Naive thymus-derived CD4-positive, alpha-beta T cell (primary cell): ENCODE measurements at regions of chr14 and their contacts with region 1.

Region 1: GRCh38 chr14:97602438-97603117 is 805.4 kb downstream of the VRK1 start:
- DNase-seq: peak; percentile 39 to 92 (median 89)
- ATAC-seq: peak; percentile 94
- H3K4me3 ChIP-seq: peak overlapping the region; percentile 37
- H3K4me3 Mint-ChIP-seq: no peak overlapping the region
- H3K27ac ChIP-seq: peak overlapping the region; percentile 80
- H3K27ac Mint-ChIP-seq: no peak overlapping the region
- H3K4me1 ChIP-seq: peaks cover 57 to 64% of the 10 kb centered on the region in 2 donors
- H3K4me1 Mint-ChIP-seq: peaks cover 0 to 31% (median 4%) of the 10 kb centered on the region in 7 donors
- H3K27me3 ChIP-seq: no peaks in the 10 kb centered on the region
- H3K27me3 Mint-ChIP-seq: no peaks in the 10 kb centered on the region

Region 2: DNA sequence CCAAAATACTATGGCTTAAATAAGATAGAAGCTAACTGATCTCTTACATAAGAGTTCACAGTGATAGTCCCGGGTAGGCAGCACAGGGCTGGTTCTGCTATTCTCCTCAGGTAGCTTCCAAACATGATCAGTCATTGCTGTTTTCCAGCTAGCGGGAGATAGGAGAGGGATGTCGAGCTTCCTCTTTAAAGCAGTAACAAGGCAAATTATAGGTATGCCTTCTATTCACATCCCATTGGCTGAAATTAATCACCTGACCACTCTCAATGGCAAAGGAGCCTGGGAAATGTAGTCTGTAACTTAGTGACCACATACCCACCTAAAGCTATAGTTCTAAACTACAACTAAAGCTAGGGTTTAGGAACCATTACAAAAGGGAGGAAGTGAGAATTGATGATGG is 839.9 kb before region 1 on chr14:
- CTCF ChIA-PET with region 1: no interaction called
- POLR2A ChIA-PET with region 1: no interaction called
- intact Hi-C with region 1: no loop called
- DNase-seq: peak in 7 of 9 donors; percentile 42 to 65 (median 52)
- ATAC-seq: peak; percentile 92
- H3K4me3 ChIP-seq: peak overlapping the region; percentile 19
- H3K4me3 Mint-ChIP-seq: peak overlapping the region in 9 of 10 donors; percentile 28 to 82 (median 64)
- H3K27ac ChIP-seq: no peak overlapping the region
- H3K27ac Mint-ChIP-seq: peak overlapping the region in 1 of 9 donors; percentile 73
- H3K4me1 ChIP-seq: no peaks in the 10 kb centered on the region
- H3K4me1 Mint-ChIP-seq: peaks cover 3 to 6% (median 5%) of the 10 kb centered on the region in 7 donors
- H3K27me3 ChIP-seq: no peaks in the 10 kb centered on the region
- H3K27me3 Mint-ChIP-seq: peaks cover 4 to 34% (median 9%) of the 10 kb centered on the region in 5 donors

Region 3: GRCh38 chr14:96901227-96901626 is 701.4 kb before region 1 on chr14:
- CTCF ChIA-PET with region 1: no interaction called
- POLR2A ChIA-PET with region 1: no interaction called
- intact Hi-C with region 1: no loop called
- DNase-seq: no peak
- ATAC-seq: no peak
- H3K4me3 ChIP-seq: no peak overlapping the region
- H3K4me3 Mint-ChIP-seq: no peak overlapping the region
- H3K27ac ChIP-seq: no peak overlapping the region
- H3K27ac Mint-ChIP-seq: no peak overlapping the region
- H3K4me1 ChIP-seq: no peaks in the 10 kb centered on the region
- H3K4me1 Mint-ChIP-seq: peaks cover 0 to 24% (median 5%) of the 10 kb centered on the region in 7 donors
- H3K27me3 ChIP-seq: no peaks in the 10 kb centered on the region
- H3K27me3 Mint-ChIP-seq: no peaks in the 10 kb centered on the region

Region 4: DNA sequence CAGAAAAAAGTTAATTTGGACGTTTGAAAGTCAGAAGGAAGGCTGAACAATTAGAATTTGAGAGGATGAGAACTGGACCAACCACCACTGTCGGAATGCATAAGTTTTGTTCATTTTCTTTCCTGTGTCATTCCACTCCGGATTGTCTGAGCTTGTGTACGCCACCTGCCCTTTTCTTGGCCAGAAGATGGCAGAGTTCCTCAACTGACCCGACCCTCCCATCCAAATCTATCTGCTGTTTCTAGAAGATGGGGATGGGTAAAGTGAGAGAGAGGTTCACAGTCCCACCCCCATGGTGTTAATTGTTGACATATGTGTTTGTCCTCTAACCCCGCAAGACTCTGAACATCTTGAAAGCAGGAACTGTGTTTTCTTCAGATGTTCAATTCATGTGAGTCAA is 417.4 kb before region 1 on chr14:
- CTCF ChIA-PET with region 1: interaction called, 3 read pairs
- POLR2A ChIA-PET with region 1: no interaction called
- intact Hi-C with region 1: loop called in 1 of 2 experiments (anchors 1 kb)
- DNase-seq: peak in 6 of 9 donors; percentile 1 to 36 (median 30)
- ATAC-seq: peak; percentile 57
- H3K4me3 ChIP-seq: no peak overlapping the region
- H3K4me3 Mint-ChIP-seq: no peak overlapping the region
- H3K27ac ChIP-seq: no peak overlapping the region
- H3K27ac Mint-ChIP-seq: peak overlapping the region in 4 of 9 donors; percentile 7 to 53 (median 41)
- H3K4me1 ChIP-seq: no peaks in the 10 kb centered on the region
- H3K4me1 Mint-ChIP-seq: peaks cover 0 to 22% (median 6%) of the 10 kb centered on the region in 7 donors
- H3K27me3 ChIP-seq: no peaks in the 10 kb centered on the region
- H3K27me3 Mint-ChIP-seq: peaks cover 0 to 22% (median 0%) of the 10 kb centered on the region in 5 donors

Region 5: GRCh38 chr14:97458661-97459579 is 143.7 kb before region 1 on chr14:
- CTCF ChIA-PET with region 1: no interaction called
- POLR2A ChIA-PET with region 1: interaction called, 5 read pairs
- intact Hi-C with region 1: loop called (anchors 1 to 5 kb)
- DNase-seq: peak; percentile 53 to 87 (median 81)
- ATAC-seq: peak; percentile 91
- H3K4me3 ChIP-seq: peak overlapping the region; percentile 85
- H3K4me3 Mint-ChIP-seq: peak overlapping the region; percentile 89 to 99 (median 92)
- H3K27ac ChIP-seq: peak overlapping the region; percentile 79
- H3K27ac Mint-ChIP-seq: peak overlapping the region; percentile 96 to 99 (median 98)
- H3K4me1 ChIP-seq: peaks cover 30 to 45% of the 10 kb centered on the region in 2 donors
- H3K4me1 Mint-ChIP-seq: peaks cover 33 to 79% (median 53%) of the 10 kb centered on the region in 7 donors
- H3K27me3 ChIP-seq: no peaks in the 10 kb centered on the region
- H3K27me3 Mint-ChIP-seq: no peaks in the 10 kb centered on the region

Region 6: DNA sequence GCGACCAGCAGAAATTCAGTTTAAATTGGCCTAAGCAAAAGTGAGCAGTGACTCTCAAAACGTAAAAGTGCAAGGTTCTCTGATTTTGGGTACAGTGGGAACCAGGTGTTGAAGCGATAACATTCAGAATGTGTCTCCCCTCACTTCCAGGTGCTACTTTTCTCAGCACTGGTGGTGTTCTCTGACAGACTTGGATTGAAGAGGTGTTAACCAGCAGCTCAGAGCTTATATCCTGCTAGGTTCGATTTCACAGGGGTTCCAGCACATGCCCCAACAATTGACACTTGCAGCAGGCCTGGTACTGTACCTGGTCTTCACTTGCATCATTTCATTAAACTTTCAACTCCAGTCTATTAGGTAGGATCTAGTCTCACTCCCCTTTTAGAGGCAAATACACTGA is 125.2 kb before region 1 on chr14:
- CTCF ChIA-PET with region 1: no interaction called
- POLR2A ChIA-PET with region 1: no interaction called
- intact Hi-C with region 1: no loop called
- DNase-seq: no peak
- ATAC-seq: no peak
- H3K4me3 ChIP-seq: no peak overlapping the region
- H3K4me3 Mint-ChIP-seq: no peak overlapping the region
- H3K27ac ChIP-seq: no peak overlapping the region
- H3K27ac Mint-ChIP-seq: peak overlapping the region in 1 of 9 donors; percentile 2
- H3K4me1 ChIP-seq: no peaks in the 10 kb centered on the region
- H3K4me1 Mint-ChIP-seq: peaks cover 2 to 21% (median 14%) of the 10 kb centered on the region in 7 donors
- H3K27me3 ChIP-seq: no peaks in the 10 kb centered on the region
- H3K27me3 Mint-ChIP-seq: no peaks in the 10 kb centered on the region

Region 7: GRCh38 chr14:97707603-97708002 is 105.0 kb after region 1 on chr14:
- CTCF ChIA-PET with region 1: no interaction called
- POLR2A ChIA-PET with region 1: interaction called, 3 read pairs
- intact Hi-C with region 1: loop called (anchors 1 to 5 kb)
- DNase-seq: peak in 1 of 9 donors; percentile 19
- ATAC-seq: peak; percentile 25
- H3K4me3 ChIP-seq: peak overlapping the region; percentile 7
- H3K4me3 Mint-ChIP-seq: peak overlapping the region in 9 of 10 donors; percentile 7 to 83 (median 52)
- H3K27ac ChIP-seq: no peak overlapping the region
- H3K27ac Mint-ChIP-seq: peak overlapping the region; percentile 26 to 96 (median 85)
- H3K4me1 ChIP-seq: peaks cover 81 to 85% of the 10 kb centered on the region in 2 donors
- H3K4me1 Mint-ChIP-seq: peaks cover 70 to 100% (median 98%) of the 10 kb centered on the region in 7 donors
- H3K27me3 ChIP-seq: no peaks in the 10 kb centered on the region
- H3K27me3 Mint-ChIP-seq: no peaks in the 10 kb centered on the region

Region 8: DNA sequence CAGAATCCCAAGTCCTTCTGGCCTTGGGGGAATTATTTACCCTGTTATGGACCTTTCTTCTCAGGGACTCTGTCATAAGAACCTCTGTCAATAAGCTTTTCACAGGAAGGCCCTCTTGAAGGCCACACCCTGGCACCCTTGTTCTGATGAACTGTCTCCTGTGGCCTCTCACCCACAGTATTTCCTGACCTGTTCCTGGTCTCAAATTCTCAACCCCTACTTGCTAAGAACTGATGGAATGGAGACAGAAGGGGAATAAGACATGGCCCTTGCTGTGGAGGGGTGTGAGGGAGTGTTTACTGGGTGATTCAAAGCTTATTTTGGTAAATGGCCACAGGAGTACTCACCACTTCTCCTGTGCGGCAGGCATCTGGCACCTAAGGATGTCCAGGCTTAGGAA is 586.5 kb after region 1 on chr14:
- CTCF ChIA-PET with region 1: interaction called, 11 read pairs
- POLR2A ChIA-PET with region 1: no interaction called
- intact Hi-C with region 1: loop called in 1 of 2 experiments (anchors 5 kb)
- DNase-seq: peak in 1 of 9 donors; percentile 50
- ATAC-seq: peak; percentile 40
- H3K4me3 ChIP-seq: peak overlapping the region; percentile 48
- H3K4me3 Mint-ChIP-seq: peak overlapping the region; percentile 63 to 86 (median 76)
- H3K27ac ChIP-seq: peak overlapping the region; percentile 80
- H3K27ac Mint-ChIP-seq: peak overlapping the region; percentile 92 to 100 (median 98)
- H3K4me1 ChIP-seq: peaks cover 82 to 95% of the 10 kb centered on the region in 2 donors
- H3K4me1 Mint-ChIP-seq: peaks cover 56 to 100% (median 98%) of the 10 kb centered on the region in 7 donors
- H3K27me3 ChIP-seq: no peaks in the 10 kb centered on the region
- H3K27me3 Mint-ChIP-seq: no peaks in the 10 kb centered on the region